ENCODE measurements at regions of chr6 and their contacts with region 1.

Region 1: GRCh38 chr6:42043787-42044475 is 6.4 kb upstream of the TAF8 start:
- DNase-seq: peak; percentile 90
- H3K4me3 ChIP-seq: peak overlapping the region; percentile 20
- H3K27ac ChIP-seq: peak overlapping the region; percentile 68
- H3K4me1 ChIP-seq: peaks cover 83% of the 10 kb centered on the region
- CTCF ChIP-seq: peak; percentile 97

Region 2: DNA sequence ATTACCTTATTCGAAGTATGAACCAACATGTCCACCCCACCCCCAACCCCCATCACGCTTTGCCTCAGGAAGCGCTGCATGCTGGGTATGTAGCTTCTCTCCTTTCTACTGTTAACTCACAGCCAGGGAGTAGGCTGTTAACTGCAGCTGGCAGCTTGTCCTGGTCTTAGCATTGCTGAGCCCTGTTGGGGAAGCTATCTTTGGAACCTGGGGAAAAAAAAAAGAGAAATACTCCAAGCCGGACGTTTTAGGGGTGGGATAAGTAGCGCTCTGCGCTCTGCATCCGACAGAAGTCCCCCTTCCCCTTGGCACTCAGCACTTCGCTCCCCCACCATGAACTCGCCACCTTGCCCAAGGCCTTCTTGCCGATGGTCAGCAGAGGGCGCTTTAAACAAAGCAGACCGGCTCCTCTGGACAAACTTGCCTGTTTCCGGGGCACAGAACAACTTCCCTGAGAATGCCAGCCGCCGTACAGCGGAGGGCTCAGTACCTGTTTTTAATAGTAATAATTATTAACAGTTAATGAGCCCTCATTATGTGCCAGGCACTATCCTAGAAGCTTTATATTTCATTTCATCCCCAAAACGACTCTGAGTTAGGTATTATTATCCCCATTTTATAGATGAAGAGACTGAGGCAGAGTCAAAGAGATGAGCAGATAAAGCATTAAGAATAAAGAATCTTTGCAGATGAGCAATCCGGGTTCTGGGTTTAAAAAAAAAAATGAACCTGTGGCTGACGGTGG is 440.9 kb before region 1 on chr6:
- CTCF ChIA-PET with region 1: no interaction called
- POLR2A ChIA-PET with region 1: no interaction called
- intact Hi-C with region 1: loop called (anchors 10 kb)
- DNase-seq: peak; percentile 89
- H3K4me3 ChIP-seq: peak overlapping the region; percentile 47
- H3K27ac ChIP-seq: no peak overlapping the region
- H3K4me1 ChIP-seq: peaks cover 9% of the 10 kb centered on the region
- CTCF ChIP-seq: peak; percentile 99

Region 3: DNA sequence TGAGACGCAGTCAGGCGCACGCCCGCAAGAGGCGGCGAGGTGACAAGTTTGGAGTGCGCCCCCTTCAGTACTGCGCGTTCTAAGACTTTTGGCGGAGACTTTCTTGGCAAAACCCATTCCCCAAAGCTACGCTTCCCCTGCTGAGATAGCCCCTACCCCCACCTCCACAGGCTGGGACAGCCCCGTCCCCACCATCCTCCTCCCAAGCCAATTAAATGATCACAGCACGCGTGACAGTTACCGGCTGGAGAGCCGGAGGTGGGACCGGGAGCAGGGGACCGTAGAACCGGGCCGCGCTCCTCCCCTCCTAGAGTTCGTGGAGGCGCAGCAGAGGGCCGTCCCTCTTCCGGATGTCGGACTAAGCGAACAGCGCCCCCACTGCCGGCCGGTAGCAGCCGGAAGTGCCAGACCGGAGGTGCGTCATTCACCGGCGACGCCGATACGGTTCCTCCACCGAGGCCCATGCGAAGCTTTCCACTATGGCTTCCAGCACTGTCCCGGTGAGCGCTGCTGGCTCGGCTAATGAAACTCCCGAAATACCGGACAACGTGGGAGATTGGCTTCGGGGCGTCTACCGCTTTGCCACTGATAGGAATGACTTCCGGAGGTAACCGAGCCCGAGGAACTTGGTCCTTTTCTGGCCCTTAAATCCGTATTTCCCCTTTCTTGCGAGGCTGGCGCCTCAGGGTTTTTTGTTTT is 256.6 kb before region 1 on chr6 and contains the start of gene TOMM6:
- CTCF ChIA-PET with region 1: interaction called, 5 read pairs
- POLR2A ChIA-PET with region 1: interaction called, 11 read pairs
- intact Hi-C with region 1: loop called (anchors 1 kb)
- DNase-seq: peak; percentile 97
- H3K4me3 ChIP-seq: peak within 1 kb of the TSS; percentile 86
- H3K27ac ChIP-seq: peak within 1 kb of the TSS; percentile 81
- H3K4me1 ChIP-seq: peaks cover 39% of the 10 kb centered on the region
- CTCF ChIP-seq: peak; percentile 81
- total RNA-seq, gene TOMM6: 84.9 and 131 TPM in 2 replicates

Region 4: GRCh38 chr6:41901882-41902519 is 141.9 kb before region 1 on chr6:
- CTCF ChIA-PET with region 1: no interaction called
- POLR2A ChIA-PET with region 1: interaction called, 3 read pairs
- intact Hi-C with region 1: loop called (anchors 1 kb)
- DNase-seq: peak; percentile 27
- H3K4me3 ChIP-seq: no peak overlapping the region
- H3K27ac ChIP-seq: no peak overlapping the region
- H3K4me1 ChIP-seq: no peaks in the 10 kb centered on the region
- CTCF ChIP-seq: peak; percentile 63

Region 5: GRCh38 chr6:42009966-42010891 is 33.7 kb before region 1 on chr6:
- CTCF ChIA-PET with region 1: interaction called, 3 read pairs
- POLR2A ChIA-PET with region 1: interaction called, 26 read pairs
- intact Hi-C with region 1: loop called (anchors 1 kb)
- DNase-seq: peak; percentile 96
- H3K4me3 ChIP-seq: peak overlapping the region; percentile 57
- H3K27ac ChIP-seq: peak overlapping the region; percentile 97
- H3K4me1 ChIP-seq: peaks cover 91% of the 10 kb centered on the region
- CTCF ChIP-seq: peak; percentile 41; the same call in 1 of the 2 replicates